ENCODE measurements at regions of chr10 and their contacts with region 1.

Region 1: GRCh38 chr10:30591249-30591670 is 38.3 kb downstream of the LYZL2 start:
- DNase-seq: peak in 4 of 5 donors; percentile 48 to 60 (median 54)
- H3K4me3 ChIP-seq: no peak overlapping the region
- H3K4me3 Mint-ChIP-seq: no peak overlapping the region
- H3K27ac ChIP-seq: no peak overlapping the region
- H3K27ac Mint-ChIP-seq: no peak overlapping the region
- H3K4me1 ChIP-seq: no peaks in the 10 kb centered on the region
- H3K4me1 Mint-ChIP-seq: peaks cover 0 to 2% (median 0%) of the 10 kb centered on the region in 4 donors
- H3K27me3 ChIP-seq: no peaks in the 10 kb centered on the region
- H3K27me3 Mint-ChIP-seq: peaks cover 8 to 16% of the 10 kb centered on the region in 2 donors

Region 2: DNA sequence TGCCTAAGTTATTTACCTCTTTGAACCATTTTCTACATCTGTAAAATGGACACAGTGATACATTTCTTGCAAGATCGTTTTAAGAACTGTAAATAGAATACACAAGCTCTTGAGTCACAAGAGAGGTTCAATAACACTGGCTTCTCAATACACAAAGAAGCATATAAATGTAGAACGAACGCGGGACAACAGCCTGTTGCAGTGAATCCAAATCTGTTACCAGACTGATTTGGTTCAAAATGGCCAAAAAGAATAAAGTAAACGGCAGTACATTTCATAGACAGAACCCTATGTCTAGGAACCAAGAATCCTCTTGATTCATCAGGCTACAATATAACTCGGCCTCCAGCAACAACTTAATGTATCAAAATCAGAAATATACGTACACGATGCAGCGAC is 242.9 kb before region 1 on chr10:
- CTCF ChIA-PET with region 1: interaction called, 10 read pairs
- POLR2A ChIA-PET with region 1: no interaction called
- intact Hi-C with region 1: no loop called
- DNase-seq: no peak
- H3K4me3 ChIP-seq: peak overlapping the region; percentile 82 to 96
- H3K4me3 Mint-ChIP-seq: peak overlapping the region; percentile 92 to 98 (median 94)
- H3K27ac ChIP-seq: peak overlapping the region; percentile 79
- H3K27ac Mint-ChIP-seq: peak overlapping the region; percentile 90 to 98 (median 94)
- H3K4me1 ChIP-seq: peaks cover 42% of the 10 kb centered on the region
- H3K4me1 Mint-ChIP-seq: peaks cover 35 to 60% (median 50%) of the 10 kb centered on the region in 4 donors
- H3K27me3 ChIP-seq: no peaks in the 10 kb centered on the region
- H3K27me3 Mint-ChIP-seq: no peaks in the 10 kb centered on the region

Region 3: GRCh38 chr10:30392564-30392990 is 198.7 kb before region 1 on chr10:
- CTCF ChIA-PET with region 1: interaction called, 217 read pairs
- POLR2A ChIA-PET with region 1: interaction called, 9 read pairs
- intact Hi-C with region 1: loop called (anchors 1 kb)
- DNase-seq: peak; percentile 66 to 75 (median 67)
- H3K4me3 ChIP-seq: no peak overlapping the region
- H3K4me3 Mint-ChIP-seq: peak overlapping the region in 1 of 8 donors; percentile 4
- H3K27ac ChIP-seq: no peak overlapping the region
- H3K27ac Mint-ChIP-seq: peak overlapping the region in 1 of 7 donors; percentile 62
- H3K4me1 ChIP-seq: peaks cover 6% of the 10 kb centered on the region
- H3K4me1 Mint-ChIP-seq: peaks cover 2 to 5% (median 4%) of the 10 kb centered on the region in 4 donors
- H3K27me3 ChIP-seq: no peaks in the 10 kb centered on the region
- H3K27me3 Mint-ChIP-seq: peaks cover 8 to 13% of the 10 kb centered on the region in 2 donors

Region 4: GRCh38 chr10:30413996-30414576 is 177.2 kb before region 1 on chr10:
- CTCF ChIA-PET with region 1: interaction called, 13 read pairs
- POLR2A ChIA-PET with region 1: no interaction called
- intact Hi-C with region 1: loop called (anchors 1 kb)
- DNase-seq: peak in 4 of 5 donors; percentile 46 to 53 (median 52)
- H3K4me3 ChIP-seq: no peak overlapping the region
- H3K4me3 Mint-ChIP-seq: no peak overlapping the region
- H3K27ac ChIP-seq: no peak overlapping the region
- H3K27ac Mint-ChIP-seq: no peak overlapping the region
- H3K4me1 ChIP-seq: peaks cover 15% of the 10 kb centered on the region
- H3K4me1 Mint-ChIP-seq: peaks cover 11 to 19% (median 16%) of the 10 kb centered on the region in 4 donors
- H3K27me3 ChIP-seq: no peaks in the 10 kb centered on the region
- H3K27me3 Mint-ChIP-seq: no peaks in the 10 kb centered on the region

Region 5: DNA sequence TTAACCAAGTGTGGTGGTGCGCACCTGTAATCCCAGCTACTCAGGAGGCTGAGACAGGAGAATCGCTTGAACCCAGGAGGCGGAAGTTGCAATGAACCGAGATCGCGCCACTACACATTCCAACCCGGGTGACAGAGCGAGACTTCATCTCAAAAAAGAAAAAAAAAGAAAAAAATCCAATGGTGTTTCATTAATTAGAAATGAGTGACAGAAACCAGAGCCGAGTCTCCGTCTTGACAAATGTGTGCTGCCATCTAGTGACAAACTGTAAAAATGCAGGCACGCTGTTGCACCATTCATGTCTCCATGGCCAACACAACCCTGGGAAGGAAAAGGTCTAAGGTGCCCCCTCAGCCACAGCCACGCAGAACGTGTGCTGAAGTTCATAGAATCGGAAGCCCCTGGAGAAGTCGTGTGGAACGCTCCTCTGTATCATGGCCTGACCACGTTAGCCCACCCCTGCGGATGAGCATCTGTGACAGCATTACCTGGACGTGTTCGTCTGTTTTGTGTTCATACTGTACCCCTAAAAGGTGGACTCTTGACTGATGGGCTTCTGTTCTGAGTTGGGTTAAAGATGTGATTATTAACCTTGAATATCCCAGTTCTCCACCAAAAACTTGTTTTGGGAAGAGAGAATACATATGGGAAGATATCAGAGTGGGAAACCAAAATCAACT is 56.7 kb before region 1 on chr10:
- CTCF ChIA-PET with region 1: interaction called, 20 read pairs
- POLR2A ChIA-PET with region 1: no interaction called
- intact Hi-C with region 1: loop called (anchors 1 kb)
- DNase-seq: peak; percentile 69 to 78 (median 74)
- H3K4me3 ChIP-seq: no peak overlapping the region
- H3K4me3 Mint-ChIP-seq: no peak overlapping the region
- H3K27ac ChIP-seq: no peak overlapping the region
- H3K27ac Mint-ChIP-seq: peak overlapping the region in 3 of 7 donors; percentile 2 to 73 (median 24)
- H3K4me1 ChIP-seq: peaks cover 22% of the 10 kb centered on the region
- H3K4me1 Mint-ChIP-seq: peaks cover 11 to 30% (median 20%) of the 10 kb centered on the region in 4 donors
- H3K27me3 ChIP-seq: no peaks in the 10 kb centered on the region
- H3K27me3 Mint-ChIP-seq: no peaks in the 10 kb centered on the region